ENCODE measurements at regions of chr2 and their contacts with region 1.

Region 1: DNA sequence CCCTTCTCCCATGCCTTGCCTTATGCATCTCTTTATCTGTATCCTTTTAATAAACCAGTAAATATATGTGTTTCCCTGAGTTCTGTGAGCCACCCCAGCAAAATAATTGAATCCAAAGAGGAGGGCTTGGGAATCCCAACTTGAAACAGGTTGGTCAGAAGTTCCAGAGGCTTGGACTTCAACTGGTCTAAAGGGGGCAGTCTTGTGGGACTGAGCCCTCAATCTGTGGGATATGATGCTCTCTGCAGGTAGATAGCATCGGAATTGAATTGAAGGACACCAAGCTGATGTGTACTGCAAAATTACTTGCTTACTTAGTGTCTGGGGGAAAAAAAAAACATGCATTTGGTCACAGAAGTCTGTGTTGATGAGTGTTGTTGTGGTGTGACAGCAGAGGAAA is 1033.5 kb upstream of the TMEFF2 start:
- DNase-seq: no peak
- ATAC-seq: peak; percentile 91
- H3K4me3 Mint-ChIP-seq: no peak overlapping the region
- H3K27ac Mint-ChIP-seq: no peak overlapping the region
- H3K4me1 Mint-ChIP-seq: no peaks in the 10 kb centered on the region
- H3K27me3 Mint-ChIP-seq: no peaks in the 10 kb centered on the region
- CTCF ChIP-seq: no peak

Region 2: GRCh38 chr2:193240752-193241151 is 12.5 kb after region 1 on chr2:
- CTCF ChIA-PET with region 1: interaction called, 16 read pairs
- POLR2A ChIA-PET with region 1: no interaction called
- DNase-seq: no peak
- ATAC-seq: peak; percentile 78
- H3K4me3 Mint-ChIP-seq: no peak overlapping the region
- H3K27ac Mint-ChIP-seq: no peak overlapping the region
- H3K4me1 Mint-ChIP-seq: no peaks in the 10 kb centered on the region
- H3K27me3 Mint-ChIP-seq: no peaks in the 10 kb centered on the region
- CTCF ChIP-seq: peak; percentile 37

Measured in WTC11 (cell line).